Mammary epithelial cell (primary cell): ENCODE measurements at regions of chr7 and their contacts with region 1.

Region 1: DNA sequence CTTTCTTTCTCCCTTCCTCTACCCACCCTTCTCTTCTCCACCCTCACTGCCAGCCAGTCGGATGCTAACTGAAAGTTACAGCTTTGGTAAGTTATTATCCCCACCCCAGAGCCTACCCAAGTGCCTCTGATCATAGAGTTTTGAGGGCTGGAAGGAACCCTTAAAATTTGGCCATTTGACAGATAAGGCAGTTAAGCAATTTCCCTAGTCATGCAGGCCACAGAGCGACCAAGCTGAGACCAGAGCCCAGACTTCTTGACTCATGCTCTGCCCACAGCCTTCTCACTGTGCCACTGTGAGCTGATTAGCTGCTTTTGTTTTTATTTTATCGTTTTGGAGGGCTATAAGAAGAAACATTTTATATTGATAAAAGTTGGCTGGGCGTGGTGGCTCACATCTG is 17.2 kb downstream of the SAP25 start:
- DNase-seq: no peak
- H3K4me3 ChIP-seq: no peak overlapping the region
- H3K27ac ChIP-seq: no peak overlapping the region
- H3K4me1 ChIP-seq: no peaks in the 10 kb centered on the region
- H3K27me3 ChIP-seq: no peaks in the 10 kb centered on the region
- CTCF ChIP-seq: no peak

Region 2: DNA sequence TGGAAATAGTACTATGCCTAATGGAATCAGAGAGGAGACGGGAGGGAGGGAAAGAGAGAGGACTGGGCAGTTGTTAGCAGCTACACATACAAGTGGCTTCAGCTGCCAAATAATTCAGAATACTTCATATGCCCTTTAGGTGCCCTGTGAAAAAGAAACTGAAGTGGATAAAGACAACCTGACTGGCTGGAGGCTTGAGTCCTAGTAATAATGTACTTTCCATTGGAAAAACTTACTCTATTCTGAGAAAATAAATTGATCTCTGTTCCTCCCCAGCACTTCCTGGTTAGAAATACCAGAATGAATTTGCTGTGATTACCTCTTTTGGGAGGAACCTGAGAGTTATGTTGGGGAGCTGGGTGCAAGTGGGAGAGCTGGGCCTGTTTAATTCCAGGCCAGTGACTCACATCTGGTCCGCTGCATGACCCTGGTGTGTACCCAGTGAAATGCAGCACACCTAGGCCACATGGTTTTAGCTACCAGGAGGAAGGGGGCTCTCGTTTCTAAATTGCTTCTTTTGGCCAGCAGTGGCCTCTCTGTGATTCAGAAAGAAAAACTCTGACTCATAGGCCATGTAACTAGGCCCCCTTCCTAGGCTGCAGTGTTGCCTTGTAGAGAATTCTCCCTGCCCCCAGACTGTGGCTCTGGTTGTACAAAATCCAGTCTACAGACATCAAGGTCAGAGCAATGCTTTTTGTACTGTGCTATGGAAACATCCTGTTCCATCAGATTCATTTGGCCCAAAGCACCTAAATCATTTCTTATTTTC is 11.0 kb before region 1 on chr7:
- CTCF ChIA-PET with region 1: no interaction called
- dilution Hi-C with region 1: no loop called
- in situ Hi-C with region 1: no loop called
- intact Hi-C with region 1: loop called (anchors 2 kb)
- DNase-seq: peak; percentile 85
- H3K4me3 ChIP-seq: no peak overlapping the region
- H3K27ac ChIP-seq: peak overlapping the region; percentile 62
- H3K4me1 ChIP-seq: peaks cover 27% of the 10 kb centered on the region
- H3K27me3 ChIP-seq: no peaks in the 10 kb centered on the region
- CTCF ChIP-seq: no peak

Region 3: GRCh38 chr7:100573691-100574361 is 17.3 kb after region 1 on chr7 and contains the start of gene SAP25:
- CTCF ChIA-PET with region 1: interaction called, 11 read pairs
- dilution Hi-C with region 1: no loop called
- in situ Hi-C with region 1: no loop called
- intact Hi-C with region 1: no loop called
- DNase-seq: no peak
- H3K4me3 ChIP-seq: no peak within 1 kb of the TSS
- H3K27ac ChIP-seq: no peak within 1 kb of the TSS
- H3K4me1 ChIP-seq: peaks cover 10% of the 10 kb centered on the region
- H3K27me3 ChIP-seq: no peaks in the 10 kb centered on the region
- CTCF ChIP-seq: no peak
- total RNA-seq, gene SAP25: 2.0 TPM in 1 of 2 donors, not detected in the other

Region 4: GRCh38 chr7:100604028-100604975 is 47.8 kb after region 1 on chr7:
- CTCF ChIA-PET with region 1: no interaction called
- dilution Hi-C with region 1: no loop called
- in situ Hi-C with region 1: no loop called
- intact Hi-C with region 1: no loop called
- DNase-seq: peak; percentile 42
- H3K4me3 ChIP-seq: peak overlapping the region; percentile 53 to 74 (median 64)
- H3K27ac ChIP-seq: no peak overlapping the region
- H3K4me1 ChIP-seq: peaks cover 18% of the 10 kb centered on the region
- H3K27me3 ChIP-seq: no peaks in the 10 kb centered on the region
- CTCF ChIP-seq: peak in 1 of 2 donors; percentile 43